ENCODE measurements at regions of chr1 and their contacts with region 1.

Region 1: GRCh38 chr1:39098546-39099250 is 72.5 kb downstream of the NDUFS5 start:
- DNase-seq: peak; percentile 54
- H3K4me3 ChIP-seq: no peak overlapping the region
- H3K27ac ChIP-seq: no peak overlapping the region
- H3K4me1 ChIP-seq: peaks cover 11% of the 10 kb centered on the region
- H3K27me3 ChIP-seq: no peaks in the 10 kb centered on the region
- CTCF ChIP-seq: peak; percentile 57 to 82 (median 74)
- POLR2A ChIP-seq: no peak

Region 2: DNA sequence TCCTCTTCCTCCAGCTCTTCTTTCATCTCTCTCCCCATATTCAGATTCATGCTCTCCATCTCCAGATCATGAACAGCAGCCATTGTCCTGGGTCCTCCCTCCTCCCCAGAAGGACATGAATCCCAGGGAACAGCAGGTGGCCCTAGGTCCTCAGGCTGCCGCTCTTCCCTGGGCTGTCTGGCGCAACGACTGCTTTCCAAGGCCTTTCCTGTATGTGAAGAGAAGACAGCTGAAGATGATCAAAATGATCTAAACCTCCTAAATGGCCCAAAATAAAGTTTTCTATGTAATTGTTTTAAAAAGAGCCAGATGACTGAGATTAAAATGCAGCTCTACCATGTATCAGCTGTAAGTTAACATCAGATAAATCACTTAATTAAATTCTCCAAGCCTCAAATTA is 179.6 kb before region 1 on chr1:
- intact Hi-C with region 1: no loop called
- DNase-seq: no peak
- H3K4me3 ChIP-seq: no peak overlapping the region
- H3K27ac ChIP-seq: no peak overlapping the region
- H3K4me1 ChIP-seq: no peaks in the 10 kb centered on the region
- H3K27me3 ChIP-seq: no peaks in the 10 kb centered on the region
- CTCF ChIP-seq: peak in 1 of 4 experiments; percentile 17
- POLR2A ChIP-seq: no peak

Region 3: DNA sequence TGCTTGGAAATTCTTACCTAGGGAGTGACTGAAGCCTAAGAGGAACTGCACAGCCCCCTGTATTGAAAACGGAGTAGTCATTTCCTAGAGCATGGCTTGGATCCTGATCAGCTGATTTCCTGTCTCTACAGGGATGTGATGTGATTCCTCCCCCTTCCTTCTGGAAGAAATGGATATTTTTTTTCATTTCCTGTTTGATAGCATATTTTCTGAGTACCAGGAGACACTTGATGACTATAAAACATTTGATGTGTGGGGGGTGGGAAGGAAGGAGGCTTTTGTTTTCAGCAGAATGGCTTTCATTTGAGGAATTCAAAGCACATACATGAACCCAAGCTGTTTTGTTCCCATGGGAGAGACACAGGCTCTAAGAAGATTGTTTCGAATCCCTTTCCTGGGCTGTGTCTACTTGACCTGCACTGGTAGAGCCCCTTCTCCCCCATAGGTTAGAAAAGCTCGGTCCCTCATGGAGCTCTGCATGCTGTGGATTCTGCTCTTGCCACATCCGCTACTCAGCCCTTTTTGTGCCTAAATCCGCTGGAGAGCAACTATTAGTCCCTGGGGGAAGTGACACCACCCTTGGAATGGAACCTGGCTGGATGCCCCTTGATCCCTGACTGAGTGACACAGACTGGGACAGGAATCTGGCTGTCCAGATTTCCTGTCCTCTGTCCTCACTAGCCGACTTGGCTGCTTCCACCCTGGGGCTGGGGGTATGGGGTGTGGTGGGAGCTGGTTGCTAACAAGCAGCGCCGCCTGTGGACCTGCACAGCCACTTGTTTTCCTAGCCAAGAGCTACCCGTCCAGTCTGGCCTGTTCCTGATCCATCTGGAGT is 34.0 kb after region 1 on chr1:
- intact Hi-C with region 1: no loop called
- DNase-seq: peak; percentile 94
- H3K4me3 ChIP-seq: no peak overlapping the region
- H3K27ac ChIP-seq: peak overlapping the region; percentile 73 to 75
- H3K4me1 ChIP-seq: peaks cover 23% of the 10 kb centered on the region
- H3K27me3 ChIP-seq: no peaks in the 10 kb centered on the region
- CTCF ChIP-seq: peak in 3 of 4 experiments; percentile 40 to 56 (median 47)
- POLR2A ChIP-seq: no peak

Region 4: GRCh38 chr1:39258146-39258924 is 159.6 kb after region 1 on chr1:
- intact Hi-C with region 1: loop called (anchors 2 kb)
- DNase-seq: peak; percentile 68
- H3K4me3 ChIP-seq: no peak overlapping the region
- H3K27ac ChIP-seq: no peak overlapping the region
- H3K4me1 ChIP-seq: no peaks in the 10 kb centered on the region
- H3K27me3 ChIP-seq: no peaks in the 10 kb centered on the region
- CTCF ChIP-seq: peak; percentile 48 to 92 (median 84)
- POLR2A ChIP-seq: no peak

Region 5: GRCh38 chr1:39387452-39387851 is 288.8 kb after region 1 on chr1:
- intact Hi-C with region 1: loop called (anchors 10 kb)
- DNase-seq: no peak
- H3K4me3 ChIP-seq: no peak overlapping the region
- H3K27ac ChIP-seq: peak overlapping the region in 1 of 2 donors; percentile 62
- H3K4me1 ChIP-seq: no peaks in the 10 kb centered on the region
- H3K27me3 ChIP-seq: no peaks in the 10 kb centered on the region
- CTCF ChIP-seq: no peak
- POLR2A ChIP-seq: no peak

Region 6: GRCh38 chr1:39538588-39539465 is 440.1 kb after region 1 on chr1:
- intact Hi-C with region 1: loop called (anchors 5 kb)
- DNase-seq: peak; percentile 68
- H3K4me3 ChIP-seq: no peak overlapping the region
- H3K27ac ChIP-seq: no peak overlapping the region
- H3K4me1 ChIP-seq: no peaks in the 10 kb centered on the region
- H3K27me3 ChIP-seq: no peaks in the 10 kb centered on the region
- CTCF ChIP-seq: peak; percentile 75 to 94 (median 88)
- POLR2A ChIP-seq: no peak

Measured in prostate gland (tissue), 2 donors.